ENCODE measurements at regions of chr15 and their contacts with region 1.

Region 1: GRCh38 chr15:74615508-74616365 is at the start of gene CLK3:
- DNase-seq: peak; percentile 99
- ATAC-seq: peak; percentile 92
- H3K4me3 Mint-ChIP-seq: peak within 1 kb of the TSS; percentile 86
- H3K27ac Mint-ChIP-seq: peak within 1 kb of the TSS; percentile 95
- H3K4me1 Mint-ChIP-seq: peaks cover 17% of the 10 kb centered on the region
- H3K27me3 Mint-ChIP-seq: peaks cover 22% of the 10 kb centered on the region
- CTCF ChIP-seq: no peak
- total RNA-seq, gene CLK3: 45.2 to 48.1 TPM (median 46.3 TPM) in 3 replicates

Region 2: GRCh38 chr15:74565381-74566085 is 50.2 kb before region 1 on chr15:
- CTCF ChIA-PET with region 1: no interaction called
- POLR2A ChIA-PET with region 1: no interaction called
- DNase-seq: no peak
- ATAC-seq: no peak
- H3K4me3 Mint-ChIP-seq: no peak overlapping the region
- H3K27ac Mint-ChIP-seq: peak overlapping the region; percentile 67
- H3K4me1 Mint-ChIP-seq: peaks cover 21% of the 10 kb centered on the region
- H3K27me3 Mint-ChIP-seq: no peaks in the 10 kb centered on the region
- CTCF ChIP-seq: no peak

Region 3: DNA sequence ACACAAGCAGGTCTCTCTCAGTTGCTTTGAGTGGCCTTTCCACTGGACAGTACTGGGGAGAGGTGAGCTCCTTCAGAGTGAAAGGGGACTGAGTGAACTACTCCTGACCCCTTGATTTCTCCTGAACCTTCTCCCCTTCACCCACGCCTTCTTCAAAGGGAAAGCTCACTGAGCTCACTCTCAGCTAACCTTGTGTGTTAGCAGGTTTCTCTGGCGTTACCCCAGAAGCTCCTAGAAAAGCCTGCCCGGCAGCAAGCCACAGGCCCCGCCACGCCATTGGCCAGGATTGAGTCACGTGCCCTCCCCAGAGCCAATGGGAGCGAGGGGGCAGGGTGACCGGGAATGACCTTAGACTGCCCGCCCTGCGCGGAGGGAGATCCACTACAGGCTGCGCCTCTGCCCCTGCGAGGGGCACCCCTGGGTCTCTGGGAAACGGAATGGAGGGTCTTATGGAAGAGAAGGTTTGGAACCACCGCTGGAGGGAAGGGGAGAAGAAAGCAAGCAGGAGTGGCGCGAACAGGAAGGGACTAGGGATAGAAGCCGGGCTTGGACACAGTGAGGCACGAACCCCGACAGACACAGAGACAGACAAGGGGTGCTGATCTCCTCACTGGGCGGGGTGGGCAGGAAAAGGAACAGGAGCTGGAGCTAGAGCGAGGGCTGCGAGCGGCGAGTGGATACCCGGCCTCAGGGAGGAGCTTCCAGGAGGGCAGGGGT is 17.5 kb before region 1 on chr15:
- CTCF ChIA-PET with region 1: interaction called, 7 read pairs
- POLR2A ChIA-PET with region 1: interaction called, 10 read pairs
- DNase-seq: peak; percentile 91
- ATAC-seq: peak; percentile 91
- H3K4me3 Mint-ChIP-seq: peak overlapping the region; percentile 79
- H3K27ac Mint-ChIP-seq: peak overlapping the region; percentile 99
- H3K4me1 Mint-ChIP-seq: peaks cover 14% of the 10 kb centered on the region
- H3K27me3 Mint-ChIP-seq: no peaks in the 10 kb centered on the region
- CTCF ChIP-seq: no peak